H1 (cell line): ENCODE measurements at regions of chr1 and their contacts with region 1.

Region 1: DNA sequence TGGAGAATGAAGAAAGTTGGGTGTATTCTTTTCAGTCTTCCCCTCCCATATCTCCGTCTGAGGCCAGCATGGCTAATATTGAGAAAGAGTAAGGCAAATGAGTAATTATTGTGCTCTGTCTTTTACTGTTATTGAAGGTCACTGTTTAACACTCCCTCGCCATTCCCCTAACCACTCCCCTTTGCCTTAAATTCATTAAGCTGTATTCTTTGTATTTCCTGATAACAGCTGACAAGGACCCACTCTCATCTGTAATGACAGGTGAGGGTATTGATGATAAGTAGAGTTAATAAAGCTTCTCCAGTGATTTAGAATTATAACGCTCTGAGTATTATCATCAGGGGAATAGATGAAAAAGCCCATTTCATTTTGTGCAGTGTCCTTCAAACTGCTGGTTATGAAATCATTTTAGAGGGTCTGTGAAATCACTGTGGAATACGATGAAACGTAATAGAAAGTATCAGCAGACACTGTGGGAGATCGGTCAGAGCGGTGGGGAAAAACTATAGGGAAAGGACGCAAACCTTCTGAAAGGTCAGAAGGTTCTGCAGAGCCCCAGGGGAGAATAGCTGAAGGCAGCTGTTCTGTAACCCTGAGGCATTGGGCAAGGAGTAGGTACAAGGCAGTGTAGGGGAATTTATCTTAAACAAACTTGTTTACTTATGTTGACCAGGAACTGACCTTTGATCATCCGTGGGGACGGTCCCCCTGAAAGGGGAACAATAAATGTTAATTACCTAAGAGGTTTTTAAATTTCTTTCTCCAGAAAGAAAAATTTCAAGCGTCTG is 46.3 kb upstream of the CACYBP start:
- DNase-seq: no peak
- H3K4me3 ChIP-seq: no peak overlapping the region
- H3K27ac ChIP-seq: no peak overlapping the region
- H3K4me1 ChIP-seq: peaks cover 0 to 4% (median 1%) of the 10 kb centered on the region in 4 experiments; a peak in 3 of 7 replicates
- H3K27me3 ChIP-seq: no peaks in the 10 kb centered on the region
- CTCF ChIP-seq: no peak
- EP300 ChIP-seq: no peak
- POLR2A ChIP-seq: no peak
- RAD21 ChIP-seq: no peak

Region 2: GRCh38 chr1:174964261-174964971 is 10.9 kb after region 1 on chr1:
- CTCF ChIA-PET with region 1: interaction called, 3 read pairs
- POLR2A ChIA-PET with region 1: interaction called, 11 read pairs
- DNase-seq: no peak
- H3K4me3 ChIP-seq: no peak overlapping the region
- H3K27ac ChIP-seq: no peak overlapping the region
- H3K4me1 ChIP-seq: peaks cover 0 to 2% (median 0%) of the 10 kb centered on the region in 4 experiments; a peak in 1 of 7 replicates
- H3K27me3 ChIP-seq: no peaks in the 10 kb centered on the region
- CTCF ChIP-seq: no peak
- EP300 ChIP-seq: no peak
- POLR2A ChIP-seq: no peak
- RAD21 ChIP-seq: no peak